Heart right ventricle (tissue), 16 donors: ENCODE measurements at regions of chr15 and their contacts with region 1.

Region 1: DNA sequence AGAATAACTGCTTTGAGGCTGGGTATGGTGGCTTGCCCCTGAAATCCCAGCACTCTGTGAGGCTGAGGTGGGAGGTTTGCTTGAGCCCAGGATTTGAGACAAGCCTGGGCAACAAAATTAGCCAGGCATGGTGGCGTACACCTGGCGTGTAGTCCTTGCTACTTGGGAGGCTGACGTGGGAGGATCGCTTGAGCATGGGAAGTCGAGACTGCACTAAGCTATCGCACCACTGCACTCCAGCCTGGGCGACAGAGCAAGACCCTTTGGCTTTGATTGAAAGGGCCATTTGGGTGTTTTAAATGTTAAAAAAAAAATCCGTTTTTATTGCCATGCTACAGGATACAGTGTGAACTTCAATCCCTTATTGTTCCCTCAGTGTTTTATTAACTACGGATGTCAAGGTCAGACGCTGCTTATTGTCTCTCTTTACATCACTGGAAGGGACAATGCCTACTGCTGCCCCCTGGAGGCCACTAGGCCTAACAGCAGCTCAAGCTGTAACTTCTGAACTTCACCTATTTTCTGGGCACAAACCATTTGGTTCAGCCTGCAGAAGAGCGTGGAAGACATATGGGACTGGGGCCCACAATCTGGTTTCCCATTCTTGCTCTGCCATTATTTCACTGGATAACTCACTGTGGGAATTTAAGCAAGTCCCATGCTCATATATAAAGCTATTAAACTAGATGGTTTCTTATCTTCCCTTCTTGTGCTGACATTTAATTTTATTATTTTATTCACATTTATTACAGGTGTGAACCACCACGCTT is 15.3 kb upstream of the IREB2 start:
- DNase-seq: peak; percentile 52 to 62
- ATAC-seq: peak in 7 of 8 donors; percentile 47 to 81 (median 69)
- H3K4me3 ChIP-seq: no peak overlapping the region
- H3K27ac ChIP-seq: no peak overlapping the region
- H3K4me1 ChIP-seq: peaks cover 0 to 11% (median 0%) of the 10 kb centered on the region in 9 donors
- H3K27me3 ChIP-seq: peaks cover 0 to 8% (median 0%) of the 10 kb centered on the region in 7 donors
- CTCF ChIP-seq: peak; percentile 81 to 96 (median 94)

Region 2: GRCh38 chr15:77959432-77959879 is 463.3 kb before region 1 on chr15:
- intact Hi-C with region 1: loop called in 1 of 10 experiments (anchors 10 kb)
- DNase-seq: peak; percentile 75 to 79
- ATAC-seq: peak; percentile 96 to 98 (median 97)
- H3K4me3 ChIP-seq: peak overlapping the region in 5 of 10 donors; percentile 24 to 38 (median 27)
- H3K27ac ChIP-seq: no peak overlapping the region
- H3K4me1 ChIP-seq: peaks cover 0 to 8% (median 4%) of the 10 kb centered on the region in 9 donors
- H3K27me3 ChIP-seq: no peaks in the 10 kb centered on the region
- CTCF ChIP-seq: peak; percentile 96 to 99 (median 97)